ENCODE measurements at regions of chr14 and their contacts with region 1.

Region 1: GRCh38 chr14:95662376-95663186 is 23.6 kb upstream of the TCL1B start:
- DNase-seq: no peak
- H3K4me3 ChIP-seq: no peak overlapping the region
- H3K27ac ChIP-seq: no peak overlapping the region
- H3K4me1 ChIP-seq: peaks cover 29% of the 10 kb centered on the region
- H3K27me3 ChIP-seq: no peaks in the 10 kb centered on the region
- CTCF ChIP-seq: no peak

Region 2: DNA sequence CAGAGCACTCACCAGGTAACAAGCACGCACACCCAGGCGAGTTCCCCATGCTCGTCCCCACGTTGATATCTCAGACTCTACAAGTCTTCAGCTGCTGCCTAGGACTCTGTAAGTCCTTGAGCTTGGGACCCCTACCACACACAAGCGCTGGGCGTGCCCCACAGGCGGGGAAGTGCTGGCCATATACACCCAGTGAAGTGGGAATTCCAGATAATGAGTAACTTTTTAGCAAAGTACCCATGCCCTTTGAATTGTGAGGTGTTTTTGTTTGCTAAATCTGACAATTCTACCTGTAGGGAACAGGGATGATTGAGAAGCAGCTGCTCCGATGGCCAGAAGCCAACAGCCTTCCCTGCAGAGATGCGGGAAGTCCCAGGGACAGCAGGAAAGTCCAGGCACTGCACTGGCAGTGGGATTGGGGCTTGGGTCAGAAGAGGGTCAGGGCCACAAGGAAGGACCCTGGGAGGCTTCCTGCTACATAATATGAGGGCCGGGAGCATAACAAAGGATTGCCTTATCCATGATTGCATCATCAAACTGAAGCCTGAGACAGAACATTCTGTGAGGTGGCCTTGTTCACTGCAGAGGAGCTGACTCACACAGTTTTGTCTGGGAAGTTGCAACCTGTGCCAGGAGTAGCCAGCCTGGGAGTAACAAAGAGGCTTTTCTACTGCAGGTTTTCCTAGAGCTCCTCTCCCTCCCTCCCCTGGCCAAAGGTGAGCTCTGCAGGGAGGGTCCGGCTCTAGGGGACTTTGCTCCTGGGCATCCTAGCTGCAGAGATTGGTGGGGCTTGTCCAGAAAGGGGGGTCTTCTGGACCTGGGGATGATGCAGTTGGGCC is 1063.5 kb before region 1 on chr14:
- CTCF ChIA-PET with region 1: interaction called, 14 read pairs
- POLR2A ChIA-PET with region 1: no interaction called
- intact Hi-C with region 1: no loop called
- DNase-seq: peak; percentile 39
- H3K4me3 ChIP-seq: no peak overlapping the region
- H3K27ac ChIP-seq: no peak overlapping the region
- H3K4me1 ChIP-seq: peaks cover 26% of the 10 kb centered on the region
- H3K27me3 ChIP-seq: no peaks in the 10 kb centered on the region
- CTCF ChIP-seq: no peak

Region 3: GRCh38 chr14:95885866-95886265 is 223.3 kb after region 1 on chr14:
- CTCF ChIA-PET with region 1: no interaction called
- POLR2A ChIA-PET with region 1: no interaction called
- intact Hi-C with region 1: no loop called
- DNase-seq: no peak
- H3K4me3 ChIP-seq: no peak overlapping the region
- H3K27ac ChIP-seq: no peak overlapping the region
- H3K4me1 ChIP-seq: no peaks in the 10 kb centered on the region
- H3K27me3 ChIP-seq: peaks cover 35% of the 10 kb centered on the region
- CTCF ChIP-seq: no peak

Measured in A673 (cell line).